ENCODE measurements at regions of chr2 and their contacts with region 1.

Region 1: GRCh38 chr2:234571620-234572407 is 74.9 kb upstream of the ARL4C start:
- DNase-seq: no peak
- H3K4me3 ChIP-seq: no peak overlapping the region
- H3K27ac ChIP-seq: no peak overlapping the region
- H3K4me1 ChIP-seq: no peaks in the 10 kb centered on the region
- H3K27me3 ChIP-seq: no peaks in the 10 kb centered on the region
- CTCF ChIP-seq: no peak
- POLR2A ChIP-seq: no peak

Region 2: DNA sequence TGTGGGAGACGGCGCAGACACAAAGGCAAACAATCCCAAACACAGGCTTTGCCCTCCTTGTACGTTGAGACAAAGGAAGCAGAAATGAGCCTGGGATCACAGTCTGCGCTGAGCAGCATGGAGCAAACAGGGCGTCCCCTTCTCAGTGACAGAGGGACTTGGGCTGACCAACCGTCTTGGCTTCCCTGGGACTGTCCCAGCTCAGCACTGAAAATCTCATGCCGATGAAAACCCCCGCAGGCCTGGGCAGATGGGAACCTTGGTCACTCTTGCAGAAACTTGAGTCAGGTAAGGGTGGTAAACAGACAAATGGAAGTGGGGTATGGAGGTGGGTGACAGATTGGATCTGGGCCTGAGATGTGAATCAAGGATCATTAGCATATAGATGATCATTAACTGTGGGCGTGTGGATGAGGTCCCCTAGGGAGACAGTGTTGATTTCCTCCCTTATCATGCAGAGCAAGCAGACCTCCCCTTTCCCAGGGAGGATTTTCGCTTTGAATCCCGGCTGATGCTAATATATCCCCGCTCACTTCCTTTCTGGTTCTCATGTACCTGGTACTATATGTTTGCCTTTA is 360.9 kb after region 1 on chr2:
- intact Hi-C with region 1: loop called in 1 of 2 experiments (anchors 10 kb)
- DNase-seq: no peak
- H3K4me3 ChIP-seq: no peak overlapping the region
- H3K27ac ChIP-seq: no peak overlapping the region
- H3K4me1 ChIP-seq: no peaks in the 10 kb centered on the region
- H3K27me3 ChIP-seq: no peaks in the 10 kb centered on the region
- CTCF ChIP-seq: no peak
- POLR2A ChIP-seq: no peak

Measured in adrenal gland (tissue), 19 donors.